ENCODE measurements at regions of chr2 and their contacts with region 1.

Region 1: GRCh38 chr2:96260404-96261260 is 5.2 kb downstream of the TMEM127 start:
- DNase-seq: peak; percentile 61
- H3K4me3 ChIP-seq: peak overlapping the region; percentile 53
- H3K27ac ChIP-seq: peak overlapping the region; percentile 96
- H3K4me1 ChIP-seq: peaks cover 100% of the 10 kb centered on the region
- H3K27me3 ChIP-seq: no peaks in the 10 kb centered on the region
- CTCF ChIP-seq: peak; percentile 57

Region 2: DNA sequence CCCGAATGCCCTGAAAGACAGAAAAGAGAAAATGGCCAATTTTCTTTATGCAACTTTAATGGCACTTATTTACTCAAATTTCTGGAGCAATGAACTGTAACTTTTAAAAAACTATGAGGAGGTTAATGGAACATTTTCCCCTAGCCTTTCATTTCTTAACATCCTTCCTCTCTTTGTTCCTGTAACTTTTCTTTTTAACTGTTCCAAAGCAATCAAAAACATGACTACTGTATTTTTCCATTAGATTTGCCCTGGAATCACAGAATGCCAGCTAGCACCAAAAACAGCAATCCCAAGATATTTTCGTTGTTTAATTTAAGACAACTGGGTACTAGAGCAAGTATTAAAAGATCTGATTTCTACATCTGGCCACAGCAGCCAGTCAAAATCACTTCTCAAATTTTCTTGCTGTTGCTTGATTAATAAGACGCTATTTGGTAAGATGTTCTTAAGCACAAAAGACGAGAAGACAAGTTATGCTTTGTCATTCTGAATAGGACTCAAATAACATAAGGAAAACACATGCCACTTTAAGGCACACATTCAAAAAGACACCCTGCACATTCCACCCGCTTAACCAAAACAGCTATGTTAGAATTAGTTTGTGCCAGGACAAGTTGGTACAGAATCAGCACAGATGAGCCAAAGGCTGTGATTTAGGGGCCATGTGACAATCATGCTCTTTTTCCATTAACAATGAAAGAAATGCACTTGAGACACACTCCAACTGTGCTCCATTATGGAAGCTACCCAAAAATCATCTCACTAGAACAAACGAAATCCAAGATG is 55.6 kb before region 1 on chr2:
- intact Hi-C with region 1: loop called (anchors 2 kb)
- DNase-seq: no peak
- H3K4me3 ChIP-seq: peak overlapping the region; percentile 85
- H3K27ac ChIP-seq: peak overlapping the region; percentile 77
- H3K4me1 ChIP-seq: peaks cover 96% of the 10 kb centered on the region
- H3K27me3 ChIP-seq: no peaks in the 10 kb centered on the region
- CTCF ChIP-seq: no peak

Region 3: DNA sequence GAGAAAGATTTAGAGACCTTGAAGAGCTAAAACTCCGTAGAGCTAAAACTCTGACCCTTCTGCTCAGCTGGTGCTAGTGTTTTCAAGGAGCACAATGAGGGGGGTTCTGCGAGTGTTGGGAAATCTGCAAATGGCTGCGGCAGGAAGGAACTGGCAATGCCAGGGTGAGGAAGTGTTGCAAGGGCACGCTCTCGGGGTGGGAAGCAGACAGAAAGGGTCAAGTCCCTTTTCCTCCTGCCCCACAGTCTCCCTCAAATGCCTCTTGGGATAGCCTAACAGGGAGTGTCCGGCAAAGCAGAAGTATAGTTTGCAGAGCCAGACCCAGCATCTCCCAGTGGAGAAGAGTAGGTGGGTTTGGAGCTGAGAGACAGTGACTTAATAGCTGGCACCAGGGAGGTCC is 135.5 kb after region 1 on chr2:
- intact Hi-C with region 1: no loop called
- DNase-seq: no peak
- H3K4me3 ChIP-seq: no peak overlapping the region
- H3K27ac ChIP-seq: peak overlapping the region; percentile 15
- H3K4me1 ChIP-seq: peaks cover 6% of the 10 kb centered on the region
- H3K27me3 ChIP-seq: peaks cover 7% of the 10 kb centered on the region
- CTCF ChIP-seq: no peak

Region 4: GRCh38 chr2:96536445-96537065 is 275.9 kb after region 1 on chr2 and contains the start of gene ARID5A:
- intact Hi-C with region 1: no loop called
- DNase-seq: peak; percentile 96
- H3K4me3 ChIP-seq: peak within 1 kb of the TSS; percentile 97
- H3K27ac ChIP-seq: peak within 1 kb of the TSS; percentile 95
- H3K4me1 ChIP-seq: peaks cover 94% of the 10 kb centered on the region
- H3K27me3 ChIP-seq: no peaks in the 10 kb centered on the region
- CTCF ChIP-seq: peak; percentile 66
- total RNA-seq, gene ARID5A: 17.3 TPM

Region 5: GRCh38 chr2:96638144-96639121 is 377.8 kb after region 1 on chr2 and contains the start of gene KANSL3:
- intact Hi-C with region 1: no loop called
- DNase-seq: peak; percentile 89
- H3K4me3 ChIP-seq: peak within 1 kb of the TSS; percentile 81
- H3K27ac ChIP-seq: peak within 1 kb of the TSS; percentile 96
- H3K4me1 ChIP-seq: peaks cover 53% of the 10 kb centered on the region
- H3K27me3 ChIP-seq: no peaks in the 10 kb centered on the region
- CTCF ChIP-seq: no peak
- total RNA-seq, gene KANSL3: 31.7 TPM